CD14-positive monocyte (primary cell): ENCODE measurements at regions of chr3 and their contacts with region 1.

Region 1: DNA sequence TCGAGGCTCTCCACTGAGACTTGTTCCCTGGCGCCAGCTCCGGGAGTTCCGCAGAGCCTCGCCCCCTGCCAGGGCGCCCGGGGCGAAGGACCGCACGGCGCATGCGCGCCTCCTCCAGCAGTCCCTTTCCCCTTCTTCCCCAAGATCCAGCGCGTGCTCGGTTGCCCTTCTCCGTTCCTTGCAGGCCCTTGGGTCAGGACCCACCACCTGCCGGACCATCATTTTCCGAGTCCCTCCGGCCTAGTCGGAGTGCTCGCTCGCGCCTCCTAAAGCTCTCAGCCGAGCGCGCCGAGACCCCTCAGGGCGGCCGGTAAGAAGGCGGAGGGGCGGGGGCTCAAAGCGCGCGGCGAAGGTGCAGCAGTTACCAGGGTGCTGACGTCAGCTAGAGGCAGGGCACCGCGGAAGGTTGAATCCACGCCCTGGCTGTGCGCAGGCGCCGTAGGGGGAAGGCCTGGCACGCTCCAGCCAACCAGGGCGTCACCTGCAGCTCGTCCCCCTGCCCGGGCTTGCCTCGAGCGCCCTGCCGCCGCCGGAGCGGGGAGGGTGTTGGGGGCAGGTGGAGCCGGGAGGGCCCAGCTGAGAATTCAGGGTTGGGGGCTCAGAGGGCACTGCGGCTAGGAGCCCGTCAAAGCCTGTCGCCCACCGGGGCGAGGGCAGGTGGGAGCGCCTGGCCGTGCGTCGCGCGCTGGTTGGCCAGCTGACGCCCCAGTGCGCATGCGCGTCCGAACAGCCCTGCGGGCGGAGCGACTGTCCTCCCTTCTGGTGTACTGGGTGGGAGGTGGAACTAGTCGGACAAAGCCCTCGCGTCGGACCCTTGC is at the start of gene TCAIM:
- DNase-seq: peak; percentile 98 to 99 (median 98)
- H3K4me3 ChIP-seq: peak within 1 kb of the TSS; percentile 89 to 92 (median 91)
- H3K4me3 Mint-ChIP-seq: peak within 1 kb of the TSS; percentile 99
- H3K27ac ChIP-seq: peak within 1 kb of the TSS; percentile 88 to 98
- H3K27ac Mint-ChIP-seq: peak within 1 kb of the TSS; percentile 97 to 99 (median 98)
- H3K4me1 ChIP-seq: peaks cover 14 to 17% of the 10 kb centered on the region in 2 donors
- H3K4me1 Mint-ChIP-seq: peaks cover 27% of the 10 kb centered on the region
- H3K27me3 ChIP-seq: no peaks in the 10 kb centered on the region
- H3K27me3 Mint-ChIP-seq: peaks cover 0 to 2% (median 0%) of the 10 kb centered on the region in 3 donors
- CTCF ChIP-seq: no peak
- polyA plus RNA-seq, gene TCAIM: 9.1 to 26.7 (median 20.0) TPM

Region 2: DNA sequence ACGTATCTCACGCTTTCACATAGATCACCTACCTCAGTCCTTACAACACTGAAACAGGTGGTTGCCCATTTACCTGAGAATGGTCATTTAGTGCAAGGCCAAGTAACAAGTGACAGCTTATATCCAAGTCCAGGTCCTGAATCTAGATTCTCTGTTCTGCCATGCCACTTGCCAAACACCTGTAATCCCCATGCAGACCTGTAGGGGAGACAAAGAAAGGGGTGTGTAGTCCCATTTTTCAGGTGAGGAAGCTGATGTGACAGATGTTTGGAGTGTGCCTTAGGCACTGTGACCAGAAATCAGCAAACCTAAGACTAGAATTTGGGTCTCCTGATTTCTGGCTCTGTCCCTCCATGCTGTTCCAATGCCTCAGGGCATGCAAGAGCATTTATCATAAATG is 323.0 kb after region 1 on chr3:
- intact Hi-C with region 1: no loop called
- DNase-seq: no peak
- H3K4me3 ChIP-seq: no peak overlapping the region
- H3K4me3 Mint-ChIP-seq: no peak overlapping the region
- H3K27ac ChIP-seq: no peak overlapping the region
- H3K27ac Mint-ChIP-seq: no peak overlapping the region
- H3K4me1 ChIP-seq: no peaks in the 10 kb centered on the region
- H3K4me1 Mint-ChIP-seq: no peaks in the 10 kb centered on the region
- H3K27me3 ChIP-seq: no peaks in the 10 kb centered on the region
- H3K27me3 Mint-ChIP-seq: peaks cover 0 to 1% (median 0%) of the 10 kb centered on the region in 3 donors
- CTCF ChIP-seq: no peak

Region 3: GRCh38 chr3:44761424-44762169 is 423.4 kb after region 1 on chr3 and contains the starts of genes KIAA1143 and KIF15:
- intact Hi-C with region 1: loop called (anchors 1 to 10 kb)
- DNase-seq: peak; percentile 94 to 97 (median 96)
- H3K4me3 ChIP-seq: peak within 1 kb of the TSS; percentile 90 to 97 (median 91)
- H3K4me3 Mint-ChIP-seq: peak within 1 kb of the TSS; percentile 88 to 94
- H3K27ac ChIP-seq: peak within 1 kb of the TSS; percentile 79 to 97
- H3K27ac Mint-ChIP-seq: peak within 1 kb of the TSS; percentile 90 to 97 (median 94)
- H3K4me1 ChIP-seq: peaks cover 14 to 19% of the 10 kb centered on the region in 2 donors
- H3K4me1 Mint-ChIP-seq: peaks cover 15% of the 10 kb centered on the region
- H3K27me3 ChIP-seq: no peaks in the 10 kb centered on the region
- H3K27me3 Mint-ChIP-seq: peaks cover 0 to 1% (median 0%) of the 10 kb centered on the region in 3 donors
- CTCF ChIP-seq: no peak
- polyA plus RNA-seq, gene KIAA1143: 2.4 to 26.4 (median 19.1) TPM
- polyA plus RNA-seq, gene KIF15: 0.15 to 0.16 TPM in 2 of 3 donors, not detected in the other